ENCODE measurements at regions of chr2 and their contacts with region 1.

Region 1: GRCh38 chr2:100984892-100985379 is 17.2 kb upstream of the RPL31 start:
- DNase-seq: peak; percentile 77
- H3K4me3 ChIP-seq: no peak overlapping the region
- H3K27ac ChIP-seq: no peak overlapping the region
- H3K4me1 ChIP-seq: no peaks in the 10 kb centered on the region
- CTCF ChIP-seq: peak; percentile 90

Region 2: GRCh38 chr2:100262555-100263320 is 722.2 kb before region 1 on chr2:
- CTCF ChIA-PET with region 1: no interaction called
- POLR2A ChIA-PET with region 1: no interaction called
- intact Hi-C with region 1: loop called (anchors 2 kb)
- DNase-seq: peak; percentile 66
- H3K4me3 ChIP-seq: no peak overlapping the region
- H3K27ac ChIP-seq: no peak overlapping the region
- H3K4me1 ChIP-seq: peaks cover 8% of the 10 kb centered on the region
- CTCF ChIP-seq: peak; percentile 97

Region 3: DNA sequence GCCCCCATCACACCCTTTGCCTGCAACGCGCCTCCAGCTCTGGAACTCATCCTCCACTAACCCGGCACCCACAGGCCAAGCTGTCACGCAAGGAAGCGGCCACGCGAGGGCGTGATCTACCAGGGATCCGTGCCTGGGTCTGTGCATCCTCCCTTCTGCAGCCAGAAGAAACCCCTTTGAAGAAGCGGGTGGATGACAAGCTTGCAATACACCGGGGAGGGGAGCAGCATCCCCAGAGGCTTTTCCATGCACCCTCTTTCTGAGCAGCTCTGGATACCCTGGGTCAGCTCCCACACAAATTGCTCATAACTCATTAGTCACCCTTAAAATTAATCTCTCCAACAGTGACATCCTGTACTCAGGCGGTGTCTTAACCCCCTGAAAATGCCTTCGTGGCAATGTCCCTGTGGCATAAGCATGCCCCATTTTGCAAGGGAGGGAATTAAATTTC is 374.5 kb before region 1 on chr2:
- CTCF ChIA-PET with region 1: no interaction called
- POLR2A ChIA-PET with region 1: no interaction called
- intact Hi-C with region 1: loop called (anchors 1 kb)
- DNase-seq: peak; percentile 50
- H3K4me3 ChIP-seq: no peak overlapping the region
- H3K27ac ChIP-seq: no peak overlapping the region
- H3K4me1 ChIP-seq: no peaks in the 10 kb centered on the region
- CTCF ChIP-seq: peak; percentile 77

Region 4: GRCh38 chr2:100730346-100730745 is 254.6 kb before region 1 on chr2:
- CTCF ChIA-PET with region 1: no interaction called
- POLR2A ChIA-PET with region 1: no interaction called
- intact Hi-C with region 1: loop called (anchors 2 kb)
- DNase-seq: peak; percentile 27
- H3K4me3 ChIP-seq: no peak overlapping the region
- H3K27ac ChIP-seq: no peak overlapping the region
- H3K4me1 ChIP-seq: no peaks in the 10 kb centered on the region
- CTCF ChIP-seq: peak; percentile 66

Region 5: DNA sequence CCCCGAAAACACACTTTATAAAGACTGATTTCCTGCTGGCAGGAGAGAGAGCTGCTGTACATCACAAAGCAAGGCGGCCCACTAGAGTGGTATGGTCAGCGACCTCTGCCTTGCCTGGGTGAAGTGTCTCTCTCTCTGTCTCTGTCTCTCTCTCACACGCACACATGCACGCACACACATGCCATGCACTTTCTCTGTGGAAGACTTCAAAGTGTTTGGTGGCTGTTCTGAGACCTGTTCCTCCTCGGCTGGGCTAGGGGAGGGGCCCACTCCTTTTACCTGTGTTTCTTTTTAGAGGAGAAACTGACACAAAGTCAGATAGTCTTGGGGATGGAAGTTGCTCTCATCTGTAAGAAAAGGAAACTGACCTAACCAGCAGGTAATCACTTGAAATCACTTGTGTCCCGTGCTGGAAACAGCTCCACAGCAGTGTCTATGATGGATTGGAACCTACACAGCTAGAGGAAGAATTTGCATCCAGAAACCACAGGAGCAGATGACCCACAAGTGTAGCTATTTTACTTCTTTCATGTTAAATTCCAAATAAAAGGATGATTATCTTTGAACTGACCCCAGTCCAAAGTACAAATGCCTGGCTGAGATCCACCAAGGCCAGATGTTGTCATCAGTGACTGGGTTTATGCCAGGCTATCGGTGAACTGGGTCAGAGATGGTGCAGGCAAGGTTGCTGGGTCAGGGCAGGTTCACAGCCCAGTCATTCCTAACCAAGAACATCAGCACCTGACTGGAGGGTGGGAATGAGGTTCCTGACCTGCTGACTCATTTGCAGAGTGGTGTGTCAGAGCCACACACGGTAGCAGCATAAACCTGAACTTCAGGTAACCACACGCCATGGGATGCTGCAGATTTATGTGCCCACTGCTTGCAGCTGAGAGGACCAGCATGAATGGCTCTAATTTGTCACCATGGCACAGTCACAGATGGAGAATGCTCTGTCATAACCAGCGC is 102.0 kb before region 1 on chr2:
- CTCF ChIA-PET with region 1: no interaction called
- POLR2A ChIA-PET with region 1: no interaction called
- intact Hi-C with region 1: no loop called
- DNase-seq: no peak
- H3K4me3 ChIP-seq: no peak overlapping the region
- H3K27ac ChIP-seq: no peak overlapping the region
- H3K4me1 ChIP-seq: no peaks in the 10 kb centered on the region
- CTCF ChIP-seq: no peak

Region 6: GRCh38 chr2:100964681-100965169 is 20.2 kb before region 1 on chr2:
- CTCF ChIA-PET with region 1: no interaction called
- POLR2A ChIA-PET with region 1: no interaction called
- intact Hi-C with region 1: no loop called
- DNase-seq: no peak
- H3K4me3 ChIP-seq: no peak overlapping the region
- H3K27ac ChIP-seq: no peak overlapping the region
- H3K4me1 ChIP-seq: no peaks in the 10 kb centered on the region
- CTCF ChIP-seq: no peak

Region 7: DNA sequence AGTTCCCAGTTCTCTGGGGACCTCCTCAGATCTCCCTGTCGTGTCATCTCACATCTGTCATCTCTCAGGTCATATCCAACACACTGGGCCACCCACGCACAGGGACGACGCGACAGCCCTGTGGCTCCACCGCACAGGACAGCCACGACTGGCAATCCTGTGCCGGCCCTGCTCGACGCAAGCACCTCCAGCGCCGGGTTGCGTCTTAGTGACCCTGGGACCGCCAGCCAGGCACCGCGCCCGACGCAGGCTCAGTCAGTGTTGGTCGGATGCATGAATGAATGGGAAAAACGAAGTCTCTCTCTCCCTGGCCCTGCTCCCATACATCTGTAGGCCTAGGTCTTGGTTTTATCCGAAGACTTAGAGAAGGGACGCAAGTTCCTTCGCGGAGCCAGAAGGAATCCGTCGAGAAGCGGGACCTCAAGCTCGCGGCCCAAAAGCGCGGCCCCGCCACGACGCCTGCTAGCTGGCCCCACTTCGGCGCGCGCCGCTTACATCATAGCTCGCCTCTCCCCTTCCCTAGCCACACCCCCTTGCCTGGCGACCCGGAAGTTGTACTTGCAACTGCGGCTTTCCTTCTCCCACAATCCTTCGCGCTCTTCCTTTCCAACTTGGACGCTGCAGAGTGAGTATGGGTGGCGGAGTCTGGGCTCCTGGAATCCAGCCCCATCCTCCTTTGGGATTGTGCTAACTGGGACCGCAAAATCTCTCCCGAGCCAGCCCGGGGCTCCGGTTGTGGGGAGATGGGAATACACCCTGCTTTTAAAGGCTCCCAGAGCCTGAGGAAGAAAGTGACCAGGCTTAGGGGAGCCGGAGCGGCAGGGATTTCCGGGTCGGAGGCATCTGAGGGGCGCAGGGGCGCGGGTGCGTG is 17.0 kb after region 1 on chr2 and contains the start of gene RPL31:
- CTCF ChIA-PET with region 1: no interaction called
- POLR2A ChIA-PET with region 1: no interaction called
- intact Hi-C with region 1: no loop called
- DNase-seq: peak; percentile 95
- H3K4me3 ChIP-seq: peak within 1 kb of the TSS; percentile 92
- H3K27ac ChIP-seq: peak within 1 kb of the TSS; percentile 56
- H3K4me1 ChIP-seq: peaks cover 25% of the 10 kb centered on the region
- CTCF ChIP-seq: no peak
- total RNA-seq, gene RPL31: 1,977 and 1,991 TPM in 2 replicates